Heart right ventricle (tissue), 16 donors: ENCODE measurements at regions of chr1 and their contacts with region 1.

Region 1: GRCh38 chr1:55081188-55081904 is 42.0 kb downstream of the PCSK9 start:
- DNase-seq: no peak
- ATAC-seq: peak in 3 of 8 donors; percentile 35 to 56 (median 50)
- H3K4me3 ChIP-seq: no peak overlapping the region
- H3K27ac ChIP-seq: peak overlapping the region in 2 of 10 donors; percentile 1 to 41
- H3K4me1 ChIP-seq: peaks cover 0 to 13% (median 10%) of the 10 kb centered on the region in 9 donors
- H3K27me3 ChIP-seq: no peaks in the 10 kb centered on the region
- CTCF ChIP-seq: no peak

Region 2: DNA sequence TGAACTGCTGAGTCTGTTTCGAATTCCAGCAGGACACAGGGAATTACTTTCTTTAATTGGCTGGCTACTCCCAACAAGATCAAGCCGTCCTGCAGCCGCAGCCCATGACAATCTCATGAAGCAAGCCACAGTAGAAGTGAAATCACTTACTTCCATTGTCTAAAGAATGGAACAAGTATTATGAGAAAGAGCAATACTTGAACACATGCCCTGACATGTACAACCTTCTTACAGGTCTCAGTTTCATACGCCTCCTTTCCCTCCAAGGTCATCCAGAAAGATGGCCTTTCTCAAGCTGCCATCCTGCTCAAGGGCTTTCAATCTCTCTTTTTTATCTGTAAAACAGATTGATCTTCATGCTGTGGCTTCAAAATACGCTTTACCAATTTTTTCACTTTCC is 43.1 kb after region 1 on chr1:
- intact Hi-C with region 1: loop called in 1 of 10 experiments (anchors 5 kb)
- DNase-seq: no peak
- ATAC-seq: no peak
- H3K4me3 ChIP-seq: no peak overlapping the region
- H3K27ac ChIP-seq: no peak overlapping the region
- H3K4me1 ChIP-seq: peaks cover 0 to 15% (median 1%) of the 10 kb centered on the region in 9 donors
- H3K27me3 ChIP-seq: no peaks in the 10 kb centered on the region
- CTCF ChIP-seq: no peak